Activated CD4-positive, alpha-beta memory T cell treated with anti-CD3 and anti-CD28 coated beads, Interleukin-2, amount 10 ng/mL, durations not matched to agents 7 days and 5 days (primary cell): ENCODE measurements at regions of chr10 and their contacts with region 1.

Region 1: DNA sequence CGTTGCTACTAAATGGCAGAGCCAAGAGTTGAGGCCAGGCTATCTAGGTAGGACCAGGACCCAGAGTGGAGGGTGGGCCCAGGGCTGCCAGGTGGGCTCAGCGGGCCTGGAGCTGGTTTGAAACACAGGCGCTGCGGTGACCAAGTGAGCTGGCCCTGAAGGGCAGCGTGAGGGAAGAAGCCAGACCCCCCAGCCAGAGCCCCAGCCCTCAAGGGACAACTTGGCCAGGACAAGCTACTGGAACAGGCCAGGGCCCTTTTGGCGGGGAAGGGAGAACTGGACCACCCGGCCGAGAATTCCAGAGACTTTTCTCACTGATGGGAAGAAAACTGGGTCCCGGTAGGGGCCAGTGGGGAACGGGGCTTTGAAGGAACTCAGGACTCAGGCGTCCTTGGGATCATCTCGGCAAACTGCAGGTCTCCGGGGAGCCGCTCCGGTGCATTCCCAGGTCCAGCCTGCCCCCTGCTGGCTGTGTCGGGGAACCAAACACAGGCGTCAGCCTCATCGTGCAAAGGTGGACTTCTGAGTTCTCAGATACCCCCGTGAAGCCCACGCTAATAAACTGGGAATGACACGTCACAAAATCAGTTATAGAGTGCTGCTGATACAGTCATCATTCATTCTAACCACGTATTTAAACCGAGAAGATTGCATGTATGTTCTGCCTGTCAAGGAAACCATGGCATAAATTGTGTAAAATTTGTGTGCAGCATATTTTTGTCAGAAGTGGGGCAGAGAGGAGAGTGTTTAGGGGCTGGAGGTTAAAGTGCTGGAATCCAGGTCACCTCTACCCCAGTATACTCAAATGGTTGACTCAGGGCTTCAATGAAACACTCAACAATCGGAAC is 76.0 kb upstream of the CPXM2 start:
- DNase-seq: peak; percentile 53
- H3K4me3 Mint-ChIP-seq: no peak overlapping the region
- H3K27ac Mint-ChIP-seq: no peak overlapping the region
- H3K4me1 Mint-ChIP-seq: no peaks in the 10 kb centered on the region
- H3K27me3 Mint-ChIP-seq: peaks cover 16% of the 10 kb centered on the region

Region 2: GRCh38 chr10:123582084-123582989 is 385.3 kb before region 1 on chr10:
- CTCF ChIA-PET with region 1: interaction called, 10 read pairs
- POLR2A ChIA-PET with region 1: no interaction called
- DNase-seq: peak; percentile 66
- H3K4me3 Mint-ChIP-seq: no peak overlapping the region
- H3K27ac Mint-ChIP-seq: no peak overlapping the region
- H3K4me1 Mint-ChIP-seq: no peaks in the 10 kb centered on the region
- H3K27me3 Mint-ChIP-seq: peaks cover 22% of the 10 kb centered on the region

Region 3: DNA sequence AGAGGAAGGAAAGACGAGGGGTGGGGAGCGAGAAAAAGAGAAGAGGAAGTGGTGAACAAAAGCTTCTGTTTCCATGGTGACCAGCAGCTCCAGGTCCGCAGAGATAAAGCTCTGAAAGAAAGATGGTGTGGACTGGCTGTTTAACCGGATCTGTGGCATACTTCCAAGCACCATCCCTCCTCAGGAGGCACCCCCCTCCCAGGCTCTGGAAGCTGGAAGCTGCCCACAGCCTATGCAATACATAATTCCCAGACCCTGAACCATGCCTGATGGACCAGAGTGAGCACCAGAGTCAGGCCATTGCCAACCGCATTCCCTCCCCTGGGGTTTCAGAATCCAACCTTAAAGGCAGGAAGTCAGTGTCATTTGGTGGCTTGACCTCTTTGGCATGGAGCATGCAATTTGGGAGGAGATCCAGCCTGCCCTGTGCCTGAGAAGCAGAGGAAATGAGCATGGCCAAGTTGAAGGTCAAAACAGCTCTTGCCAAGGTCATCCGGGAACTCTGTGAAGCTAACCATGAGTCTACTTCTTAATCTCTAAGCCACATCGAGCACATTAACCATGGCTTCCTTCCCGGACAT is 53.8 kb before region 1 on chr10:
- CTCF ChIA-PET with region 1: no interaction called
- POLR2A ChIA-PET with region 1: no interaction called
- DNase-seq: no peak
- H3K4me3 Mint-ChIP-seq: no peak overlapping the region
- H3K27ac Mint-ChIP-seq: no peak overlapping the region
- H3K4me1 Mint-ChIP-seq: peaks cover 1% of the 10 kb centered on the region
- H3K27me3 Mint-ChIP-seq: no peaks in the 10 kb centered on the region

Region 4: DNA sequence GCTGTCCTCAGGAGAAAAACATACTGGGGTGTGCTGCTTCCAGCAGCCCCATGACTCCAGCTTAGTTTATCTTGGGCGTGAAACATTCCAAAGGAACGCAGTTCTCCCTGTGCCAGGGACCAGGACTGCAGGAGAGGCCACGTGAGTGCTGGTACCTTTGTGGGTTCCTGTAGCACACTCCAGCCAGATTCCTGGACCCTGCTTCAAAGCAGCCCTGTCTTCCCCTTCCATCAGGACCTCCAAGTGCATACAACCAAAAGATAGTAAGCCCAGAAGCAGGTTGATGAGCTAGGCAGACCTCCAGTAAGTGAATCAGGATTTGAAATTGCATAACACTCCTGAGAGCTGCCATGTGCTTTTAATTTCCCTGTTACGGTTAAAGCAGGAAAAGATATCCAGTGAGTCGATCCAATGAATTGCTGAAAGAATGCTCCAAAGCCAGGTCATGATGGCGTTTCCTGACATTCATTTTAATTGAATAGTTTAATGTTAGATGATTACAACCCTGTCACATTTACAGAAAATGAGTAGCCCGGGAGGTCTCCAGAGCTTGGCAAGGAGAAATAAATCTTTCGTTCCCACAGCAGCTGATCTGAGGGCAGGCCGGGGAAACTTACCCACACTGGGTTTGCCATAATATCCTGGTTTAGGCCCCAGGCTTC is 37.1 kb before region 1 on chr10:
- CTCF ChIA-PET with region 1: no interaction called
- POLR2A ChIA-PET with region 1: no interaction called
- DNase-seq: no peak
- H3K4me3 Mint-ChIP-seq: no peak overlapping the region
- H3K27ac Mint-ChIP-seq: no peak overlapping the region
- H3K4me1 Mint-ChIP-seq: peaks cover 9% of the 10 kb centered on the region
- H3K27me3 Mint-ChIP-seq: no peaks in the 10 kb centered on the region